ENCODE measurements at regions of chr12 and their contacts with region 1.

Region 1: DNA sequence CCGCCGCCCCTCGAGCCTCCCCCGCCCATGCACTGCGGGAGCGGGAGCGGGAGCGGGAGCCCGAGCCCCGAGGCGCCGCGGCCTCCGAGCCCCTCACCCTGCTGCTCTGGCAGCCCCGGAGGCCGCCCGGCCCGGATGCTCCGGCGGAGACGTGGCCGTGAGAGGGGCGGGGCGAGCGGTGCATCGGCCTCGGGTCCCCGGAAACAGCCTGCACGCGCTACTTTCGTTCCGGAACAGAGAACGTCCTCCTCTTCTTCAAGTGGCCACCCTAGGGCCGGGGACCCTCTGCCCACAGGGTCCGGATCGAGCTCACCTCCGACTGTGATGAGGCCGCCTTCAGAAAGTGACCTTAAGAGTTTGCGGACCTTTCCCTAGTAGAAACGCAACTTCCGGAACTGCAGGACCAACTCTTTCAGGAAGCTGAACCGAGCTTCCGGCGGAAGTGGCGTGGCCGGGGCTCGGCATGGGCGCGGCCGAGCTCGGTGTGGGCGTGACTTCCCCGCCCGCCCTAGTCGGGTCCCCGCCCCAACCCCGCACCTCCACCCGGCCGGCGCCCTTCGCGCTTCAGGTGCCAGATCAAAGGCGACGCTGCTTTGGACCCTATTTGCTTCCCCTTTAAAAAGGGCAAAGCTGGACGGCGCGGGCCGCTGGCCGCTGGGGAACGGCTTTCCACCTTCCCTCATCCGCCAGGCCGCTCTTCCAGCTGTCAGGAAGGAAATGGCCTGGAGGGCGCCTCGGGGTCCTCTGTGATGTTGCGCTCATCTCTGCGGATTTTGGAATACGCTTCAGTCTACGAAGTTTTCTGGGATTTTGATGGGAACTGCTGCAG is at the start of gene GOLGA3:
- DNase-seq: peak; percentile 95
- ATAC-seq: peak; percentile 92
- H3K4me3 Mint-ChIP-seq: peak within 1 kb of the TSS; percentile 96
- H3K27ac Mint-ChIP-seq: peak within 1 kb of the TSS; percentile 100
- H3K4me1 Mint-ChIP-seq: peaks cover 50% of the 10 kb centered on the region
- H3K27me3 Mint-ChIP-seq: no peaks in the 10 kb centered on the region
- CTCF ChIP-seq: no peak
- total RNA-seq, gene GOLGA3: 51.3 and 52.4 TPM in 2 replicates

Region 2: DNA sequence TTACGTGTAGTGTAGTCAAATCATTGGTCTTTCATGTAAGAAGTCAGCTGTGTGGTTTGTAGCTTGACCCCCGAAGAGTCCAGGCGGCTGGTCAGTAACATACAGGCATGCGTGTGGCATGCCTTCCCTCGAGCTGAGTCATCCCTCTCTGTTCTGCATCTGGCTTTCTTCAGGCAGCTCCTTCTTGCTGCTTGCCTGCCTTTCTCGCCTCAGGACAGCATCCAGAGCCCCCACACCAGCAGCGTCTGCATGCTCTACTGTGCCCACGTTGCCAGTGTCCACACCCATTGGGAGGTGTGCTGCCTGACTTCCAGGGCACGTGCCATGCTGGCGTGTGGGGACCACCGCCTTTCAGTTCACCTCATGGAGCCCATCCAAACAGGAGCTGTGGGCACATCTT is 782.4 kb before region 1 on chr12:
- CTCF ChIA-PET with region 1: no interaction called
- POLR2A ChIA-PET with region 1: no interaction called
- intact Hi-C with region 1: no loop called
- DNase-seq: no peak
- ATAC-seq: no peak
- H3K4me3 Mint-ChIP-seq: no peak overlapping the region
- H3K27ac Mint-ChIP-seq: no peak overlapping the region
- H3K4me1 Mint-ChIP-seq: no peaks in the 10 kb centered on the region
- H3K27me3 Mint-ChIP-seq: no peaks in the 10 kb centered on the region
- CTCF ChIP-seq: no peak

Region 3: GRCh38 chr12:132649206-132649934 is 179.6 kb before region 1 on chr12:
- CTCF ChIA-PET with region 1: no interaction called
- POLR2A ChIA-PET with region 1: no interaction called
- intact Hi-C with region 1: no loop called
- DNase-seq: no peak
- ATAC-seq: no peak
- H3K4me3 Mint-ChIP-seq: no peak overlapping the region
- H3K27ac Mint-ChIP-seq: no peak overlapping the region
- H3K4me1 Mint-ChIP-seq: no peaks in the 10 kb centered on the region
- H3K27me3 Mint-ChIP-seq: no peaks in the 10 kb centered on the region
- CTCF ChIP-seq: no peak

Region 4: GRCh38 chr12:132710422-132711168 is 118.3 kb before region 1 on chr12 and contains the start of gene PGAM5:
- CTCF ChIA-PET with region 1: no interaction called
- POLR2A ChIA-PET with region 1: interaction called, 3 read pairs
- intact Hi-C with region 1: loop called (anchors 1 kb)
- DNase-seq: peak; percentile 96
- ATAC-seq: peak; percentile 93
- H3K4me3 Mint-ChIP-seq: peak within 1 kb of the TSS; percentile 92
- H3K27ac Mint-ChIP-seq: peak within 1 kb of the TSS; percentile 95
- H3K4me1 Mint-ChIP-seq: peaks cover 33% of the 10 kb centered on the region
- H3K27me3 Mint-ChIP-seq: no peaks in the 10 kb centered on the region
- CTCF ChIP-seq: no peak
- total RNA-seq, gene PGAM5: 44.0 and 48.7 TPM in 2 replicates

Region 5: DNA sequence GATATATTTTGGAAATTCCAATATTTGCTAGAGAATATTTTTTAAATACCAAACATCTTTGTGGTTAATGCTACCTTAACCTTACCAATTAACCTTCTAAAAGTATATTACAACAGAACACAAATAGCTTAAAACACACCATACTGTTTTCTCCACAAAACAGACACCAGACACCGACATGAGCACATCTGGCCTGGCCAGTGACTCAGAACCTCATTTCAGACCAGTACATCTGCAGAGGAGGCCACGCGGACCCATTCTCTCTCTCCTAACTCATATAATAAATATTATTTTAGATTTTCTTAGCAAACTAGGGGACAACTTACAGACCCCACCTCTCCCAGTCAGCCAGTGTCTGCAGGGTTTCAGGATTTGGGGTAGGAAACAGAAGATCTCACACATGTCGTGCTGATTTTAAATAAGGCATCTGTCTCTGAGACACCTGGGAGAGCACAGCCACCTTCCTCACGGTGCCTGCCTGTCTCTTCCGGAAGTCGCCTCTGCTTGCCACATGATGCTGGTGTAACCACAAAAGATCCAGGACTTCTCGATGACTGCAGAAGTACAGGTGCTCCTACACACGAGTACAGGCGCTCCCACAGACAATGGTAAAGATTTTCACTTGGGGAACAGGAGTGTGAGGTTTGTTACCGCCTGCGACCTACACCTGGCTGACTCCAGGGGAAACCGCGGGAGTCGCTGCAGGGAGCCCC is 57.6 kb before region 1 on chr12:
- CTCF ChIA-PET with region 1: no interaction called
- POLR2A ChIA-PET with region 1: interaction called, 12 read pairs
- intact Hi-C with region 1: loop called (anchors 2 kb)
- DNase-seq: peak; percentile 38
- ATAC-seq: peak; percentile 49
- H3K4me3 Mint-ChIP-seq: peak overlapping the region; percentile 62
- H3K27ac Mint-ChIP-seq: peak overlapping the region; percentile 94
- H3K4me1 Mint-ChIP-seq: peaks cover 68% of the 10 kb centered on the region
- H3K27me3 Mint-ChIP-seq: no peaks in the 10 kb centered on the region
- CTCF ChIP-seq: no peak

Region 6: GRCh38 chr12:132853285-132854092 is 24.6 kb after region 1 on chr12:
- CTCF ChIA-PET with region 1: no interaction called
- POLR2A ChIA-PET with region 1: no interaction called
- intact Hi-C with region 1: no loop called
- DNase-seq: no peak
- ATAC-seq: no peak
- H3K4me3 Mint-ChIP-seq: no peak overlapping the region
- H3K27ac Mint-ChIP-seq: no peak overlapping the region
- H3K4me1 Mint-ChIP-seq: no peaks in the 10 kb centered on the region
- H3K27me3 Mint-ChIP-seq: no peaks in the 10 kb centered on the region
- CTCF ChIP-seq: no peak

Region 7: GRCh38 chr12:132887513-132888351 is 58.8 kb after region 1 on chr12 and contains the start of gene CHFR:
- CTCF ChIA-PET with region 1: no interaction called
- POLR2A ChIA-PET with region 1: interaction called, 19 read pairs
- intact Hi-C with region 1: loop called (anchors 1 kb)
- DNase-seq: peak; percentile 90
- ATAC-seq: peak; percentile 98
- H3K4me3 Mint-ChIP-seq: peak within 1 kb of the TSS; percentile 98
- H3K27ac Mint-ChIP-seq: peak within 1 kb of the TSS; percentile 100
- H3K4me1 Mint-ChIP-seq: peaks cover 24% of the 10 kb centered on the region
- H3K27me3 Mint-ChIP-seq: peaks cover 7% of the 10 kb centered on the region
- CTCF ChIP-seq: no peak
- total RNA-seq, gene CHFR: 89.4 and 108 TPM in 2 replicates

Region 8: GRCh38 chr12:132908145-132909044 is 79.5 kb after region 1 on chr12:
- CTCF ChIA-PET with region 1: no interaction called
- POLR2A ChIA-PET with region 1: interaction called, 7 read pairs
- intact Hi-C with region 1: loop called (anchors 1 kb)
- DNase-seq: peak; percentile 91
- ATAC-seq: peak; percentile 90
- H3K4me3 Mint-ChIP-seq: peak overlapping the region; percentile 94
- H3K27ac Mint-ChIP-seq: peak overlapping the region; percentile 96
- H3K4me1 Mint-ChIP-seq: peaks cover 13% of the 10 kb centered on the region
- H3K27me3 Mint-ChIP-seq: peaks cover 2% of the 10 kb centered on the region
- CTCF ChIP-seq: no peak

Region 9: GRCh38 chr12:132937476-132937875 is 108.6 kb after region 1 on chr12:
- CTCF ChIA-PET with region 1: no interaction called
- POLR2A ChIA-PET with region 1: no interaction called
- intact Hi-C with region 1: no loop called
- DNase-seq: no peak
- ATAC-seq: no peak
- H3K4me3 Mint-ChIP-seq: no peak overlapping the region
- H3K27ac Mint-ChIP-seq: no peak overlapping the region
- H3K4me1 Mint-ChIP-seq: no peaks in the 10 kb centered on the region
- H3K27me3 Mint-ChIP-seq: no peaks in the 10 kb centered on the region
- CTCF ChIP-seq: no peak

Region 10: GRCh38 chr12:132956011-132956788 is 127.3 kb after region 1 on chr12 and contains the start of gene ZNF605:
- CTCF ChIA-PET with region 1: no interaction called
- POLR2A ChIA-PET with region 1: no interaction called
- intact Hi-C with region 1: loop called (anchors 2 kb)
- DNase-seq: peak; percentile 87
- ATAC-seq: peak; percentile 89
- H3K4me3 Mint-ChIP-seq: peak within 1 kb of the TSS; percentile 96
- H3K27ac Mint-ChIP-seq: peak within 1 kb of the TSS; percentile 93
- H3K4me1 Mint-ChIP-seq: peaks cover 33% of the 10 kb centered on the region
- H3K27me3 Mint-ChIP-seq: no peaks in the 10 kb centered on the region
- CTCF ChIP-seq: no peak
- total RNA-seq, gene ZNF605: 12.2 and 15.4 TPM in 2 replicates

Region 11: DNA sequence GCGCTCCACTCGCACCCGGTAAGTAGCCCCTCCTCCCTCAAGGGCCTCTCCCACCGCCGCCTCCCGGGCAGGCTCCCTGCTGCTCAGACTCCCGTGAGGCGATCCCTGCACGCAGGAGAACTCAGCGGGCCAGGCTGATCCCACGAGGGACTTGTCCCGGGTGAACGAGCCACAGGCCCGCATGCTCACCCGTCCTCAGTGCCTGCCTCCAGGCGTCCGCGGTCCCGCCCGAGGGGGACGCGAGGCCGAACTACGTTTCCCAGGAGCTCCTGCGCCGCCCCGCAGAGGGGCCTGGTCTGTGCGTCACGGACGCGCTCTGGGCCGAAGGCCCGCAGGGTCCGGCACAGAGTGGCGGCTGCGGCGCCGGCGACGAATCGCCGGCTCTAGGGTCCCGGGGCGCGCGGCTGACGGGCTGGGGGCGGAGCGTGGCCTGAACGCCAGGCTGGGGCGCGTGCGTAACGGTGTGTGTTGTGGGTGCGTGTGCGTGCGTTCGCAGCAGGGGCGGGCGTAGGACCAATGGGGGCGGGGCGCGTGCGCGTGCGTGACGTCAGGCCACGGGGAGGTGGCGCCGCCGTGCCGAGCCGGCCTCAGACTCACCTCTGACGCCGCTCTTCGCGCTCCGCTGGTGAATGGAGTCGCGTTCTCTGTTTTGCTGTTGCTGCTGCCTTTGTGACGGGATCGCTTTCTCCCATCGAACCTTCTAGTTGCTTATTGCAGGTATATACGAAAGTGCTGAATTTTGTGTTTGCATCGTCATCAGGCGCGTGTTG is 301.3 kb after region 1 on chr12 and contains the starts of genes ZNF10 and ZNF891:
- CTCF ChIA-PET with region 1: no interaction called
- POLR2A ChIA-PET with region 1: no interaction called
- intact Hi-C with region 1: loop called (anchors 2 kb)
- DNase-seq: peak; percentile 99
- ATAC-seq: peak; percentile 86
- H3K4me3 Mint-ChIP-seq: peak within 1 kb of the TSS; percentile 95
- H3K27ac Mint-ChIP-seq: peak within 1 kb of the TSS; percentile 98
- H3K4me1 Mint-ChIP-seq: peaks cover 21% of the 10 kb centered on the region
- H3K27me3 Mint-ChIP-seq: no peaks in the 10 kb centered on the region
- CTCF ChIP-seq: no peak
- total RNA-seq, gene ZNF10: 8.4 and 10.9 TPM in 2 replicates
- total RNA-seq, gene ZNF891: 2.9 and 4.0 TPM in 2 replicates